ENCODE measurements at regions of chr9 and their contacts with region 1.

Region 1: DNA sequence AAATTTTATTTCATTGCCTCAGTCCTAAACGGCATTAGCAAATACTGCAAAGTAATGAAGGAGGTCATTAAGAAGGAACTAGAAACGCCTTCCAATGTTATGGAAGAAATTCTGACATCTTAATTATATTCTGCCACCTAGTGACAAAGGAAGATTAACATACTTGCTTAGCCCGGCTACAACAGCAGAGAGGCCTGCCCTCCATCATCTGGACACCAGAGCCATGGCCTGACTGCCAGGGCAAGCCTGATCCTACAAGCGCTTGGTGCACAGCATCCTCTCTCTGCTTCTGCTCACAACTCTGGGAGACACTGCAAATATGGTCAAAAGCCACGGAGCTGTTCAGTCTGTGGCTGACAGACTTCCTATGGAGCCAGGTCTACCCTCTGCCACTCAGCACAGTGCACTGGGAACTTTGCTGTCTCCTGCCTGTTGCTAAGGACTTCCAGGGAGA is 87.3 kb upstream of the SLC44A1 start:
- DNase-seq: peak in 9 of 10 donors; percentile 16 to 91 (median 44)

Region 2: DNA sequence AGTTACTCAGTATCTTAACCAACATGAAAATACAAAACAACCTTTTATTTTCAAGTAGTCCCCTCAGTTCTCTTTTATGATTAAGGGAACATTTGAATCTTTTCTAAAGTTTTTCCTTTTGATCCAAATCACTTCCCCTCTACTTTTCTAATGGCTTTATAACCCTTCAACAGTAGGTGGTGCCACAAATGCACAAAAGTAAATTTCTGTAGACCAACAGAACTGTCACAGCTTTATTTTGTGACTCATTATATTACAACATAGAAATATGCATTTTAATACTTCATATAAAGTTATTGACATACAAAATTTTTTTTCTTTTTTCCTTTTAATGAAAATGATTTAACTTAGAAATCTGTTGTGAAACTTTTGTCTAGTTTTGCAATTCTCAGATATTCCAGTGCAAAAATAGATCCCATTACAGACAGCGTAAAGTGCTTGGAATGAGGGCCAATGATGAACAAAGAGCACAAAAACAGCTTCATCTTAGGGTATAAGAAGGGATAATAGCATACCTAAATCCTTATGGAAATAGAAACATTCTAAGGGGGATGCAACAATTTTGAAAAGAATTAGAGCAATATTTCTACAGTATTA is 376.3 kb before region 1 on chr9:
- intact Hi-C with region 1: loop called (anchors 2 kb)
- DNase-seq: no peak

Region 3: GRCh38 chr9:104863180-104863883 is 293.8 kb before region 1 on chr9:
- intact Hi-C with region 1: loop called (anchors 2 kb)
- DNase-seq: peak in 7 of 10 donors; percentile 23 to 92 (median 42)

Region 4: DNA sequence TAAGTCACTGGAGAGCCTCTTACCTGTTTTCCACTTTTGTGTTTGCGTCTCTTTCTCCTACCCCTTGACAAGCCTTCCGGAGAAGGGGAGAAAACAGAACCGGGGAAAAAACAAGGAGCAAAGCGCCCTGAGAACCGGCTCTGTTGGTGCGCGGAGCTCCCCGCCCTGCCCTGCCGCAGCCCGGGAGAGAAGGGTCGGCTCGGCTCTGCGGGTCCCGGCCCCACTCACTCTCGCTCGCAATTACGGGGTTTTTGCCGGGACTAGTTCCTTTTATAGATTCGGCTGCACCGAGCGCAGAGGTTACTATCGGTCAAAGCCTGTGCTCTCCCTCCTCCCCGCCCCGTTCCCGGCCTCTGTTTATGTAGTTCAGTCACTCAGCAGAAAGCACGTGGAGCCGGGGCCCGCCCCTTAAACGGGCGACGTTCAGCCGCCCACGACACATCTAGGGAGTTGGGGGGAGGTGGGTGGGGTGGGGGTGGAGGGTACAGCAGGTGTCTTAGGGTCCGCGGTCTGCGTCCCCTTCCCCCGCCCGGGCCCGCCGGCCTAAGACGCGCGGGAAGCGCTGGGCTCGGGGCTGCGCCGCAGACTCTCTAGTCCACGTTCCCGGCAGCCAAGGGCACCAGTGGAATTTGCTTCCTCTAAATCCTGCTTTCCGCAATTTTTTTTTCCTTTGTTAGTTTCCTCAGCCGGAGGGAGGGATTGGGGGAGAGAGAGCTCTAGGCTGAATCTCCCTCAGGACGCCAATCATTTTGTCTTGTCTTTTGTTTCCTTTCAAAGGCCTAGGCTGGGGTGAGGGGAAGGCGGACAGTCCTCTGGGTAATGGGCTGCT is 229.0 kb before region 1 on chr9 and contains the start of gene ABCA1:
- intact Hi-C with region 1: loop called (anchors 2 kb)
- DNase-seq: peak; percentile 77 to 98 (median 86)

Region 5: DNA sequence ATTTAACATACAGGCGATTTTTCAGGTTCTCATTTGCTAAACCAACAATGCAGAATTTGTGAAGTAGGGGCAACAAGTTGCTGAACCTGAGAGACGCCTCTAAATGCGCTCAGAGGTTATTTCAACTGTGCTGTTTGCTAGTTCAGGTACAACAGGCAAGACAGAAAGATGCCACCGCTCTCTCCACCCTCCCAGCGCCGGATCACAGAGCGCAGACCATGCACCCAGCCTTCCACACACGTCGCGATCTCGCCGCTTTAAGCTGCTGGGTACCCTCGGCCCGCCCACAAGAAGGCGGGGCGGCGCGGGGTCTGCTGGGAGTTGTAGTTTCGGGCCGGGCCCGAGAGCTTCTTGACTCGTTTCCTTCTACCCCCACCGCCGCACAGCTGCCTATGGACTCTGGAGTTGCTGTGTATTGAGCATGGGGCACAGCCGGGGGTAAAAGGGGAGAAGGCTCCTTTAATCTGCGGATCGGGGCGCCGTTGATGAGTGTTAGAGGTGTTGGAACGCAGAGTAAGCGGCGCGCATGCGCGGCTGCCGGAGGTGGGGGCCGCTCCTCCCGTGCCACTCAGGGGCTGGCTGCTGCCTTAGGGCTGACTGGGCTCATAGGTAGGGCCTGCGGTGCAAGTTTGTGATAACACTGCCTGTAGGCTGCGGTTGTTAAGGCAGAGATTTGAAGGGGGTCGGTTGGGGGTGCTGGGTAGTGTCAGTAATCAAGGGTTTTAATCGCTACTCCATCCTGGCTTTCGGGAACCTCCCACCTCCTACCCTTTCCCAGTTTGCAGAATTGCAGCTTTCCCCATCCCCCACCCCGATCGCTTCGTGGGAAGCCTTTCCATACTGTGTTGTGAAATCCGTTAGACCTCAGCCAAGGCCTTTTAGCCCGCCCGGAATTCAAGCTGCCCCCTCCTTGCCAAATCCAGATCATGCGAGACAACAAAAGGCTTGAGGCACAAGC is 188.9 kb before region 1 on chr9:
- intact Hi-C with region 1: loop called (anchors 5 kb)
- DNase-seq: peak; percentile 82 to 98 (median 91)

Region 6: GRCh38 chr9:104991144-104991953 is 165.8 kb before region 1 on chr9:
- intact Hi-C with region 1: loop called (anchors 5 kb)
- DNase-seq: peak; percentile 70 to 98 (median 84)

Region 7: GRCh38 chr9:105371691-105372090 is 214.5 kb after region 1 on chr9:
- intact Hi-C with region 1: no loop called
- DNase-seq: no peak

Region 8: DNA sequence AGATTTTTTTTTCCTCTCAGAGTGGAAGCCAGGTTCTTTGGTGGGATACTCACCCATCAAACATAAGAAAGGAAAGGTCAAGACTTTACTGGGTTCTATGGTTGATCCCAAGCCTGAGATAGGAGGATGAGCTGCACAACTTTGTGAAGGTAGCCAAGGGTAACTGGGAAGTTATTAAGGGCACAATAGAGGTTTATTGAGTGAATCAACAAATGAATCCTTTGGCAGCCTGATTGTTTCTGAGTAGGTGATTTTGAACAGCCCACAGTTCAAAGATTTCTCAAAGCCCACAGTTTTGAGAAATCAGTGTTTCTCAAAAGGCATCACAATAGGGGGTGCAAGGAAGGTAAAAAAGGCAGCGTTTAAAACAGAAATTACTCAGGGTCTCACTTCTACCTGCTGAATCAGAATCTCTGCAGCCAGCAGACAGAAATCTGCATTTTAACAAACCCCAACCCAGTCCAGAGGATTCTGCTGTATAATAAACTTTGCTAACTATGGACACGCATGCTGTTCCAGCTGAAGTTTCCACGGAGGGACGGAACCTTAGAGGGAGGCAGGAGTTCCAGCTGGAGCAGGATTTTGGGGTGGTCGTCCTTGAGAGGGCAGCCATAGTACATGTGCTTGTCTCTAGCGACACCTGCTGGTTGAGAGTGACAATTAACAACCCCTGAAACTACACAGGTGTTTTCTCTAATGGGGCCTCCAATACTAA is 257.9 kb after region 1 on chr9:
- intact Hi-C with region 1: loop called (anchors 2 kb)
- DNase-seq: peak in 6 of 10 donors; percentile 16 to 84 (median 64)

Measured in posterior cingulate gyrus (tissue), 11 donors.